ENCODE measurements at regions of chr18 and their contacts with region 1.

Region 1: DNA sequence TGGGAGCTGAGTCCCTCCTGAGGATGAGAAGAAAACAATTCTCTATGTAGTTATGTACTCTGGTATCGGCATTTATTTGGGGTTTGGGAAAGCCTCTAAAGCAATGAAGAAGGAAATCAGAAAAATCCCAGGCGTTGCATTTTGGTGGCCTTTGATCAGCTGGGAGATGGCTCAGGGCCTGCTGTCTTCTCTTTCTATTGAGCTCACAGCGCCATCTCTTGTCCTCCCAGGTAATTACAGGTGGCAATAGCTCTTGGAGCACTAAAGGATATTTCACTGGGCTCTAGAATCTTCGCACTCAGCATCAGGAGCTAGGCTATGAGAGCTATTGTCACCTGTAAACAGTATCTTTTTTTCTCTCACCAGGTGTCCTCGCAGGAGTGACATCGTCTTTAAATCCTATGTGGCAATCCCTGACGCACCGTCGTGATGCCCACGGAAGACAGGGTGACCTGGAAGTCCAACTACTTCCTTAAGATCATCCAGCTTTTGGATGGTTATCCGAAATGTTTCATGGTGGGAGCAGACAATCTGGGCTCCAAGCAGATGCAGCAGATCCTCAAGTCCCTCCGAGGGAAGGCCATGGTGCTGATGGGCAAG is 76.1 kb upstream of the PMAIP1 start:
- DNase-seq: peak; percentile 68
- H3K4me3 ChIP-seq: no peak overlapping the region
- H3K27ac ChIP-seq: no peak overlapping the region
- H3K27me3 ChIP-seq: no peaks in the 10 kb centered on the region
- CTCF ChIP-seq: peak; percentile 92

Region 2: DNA sequence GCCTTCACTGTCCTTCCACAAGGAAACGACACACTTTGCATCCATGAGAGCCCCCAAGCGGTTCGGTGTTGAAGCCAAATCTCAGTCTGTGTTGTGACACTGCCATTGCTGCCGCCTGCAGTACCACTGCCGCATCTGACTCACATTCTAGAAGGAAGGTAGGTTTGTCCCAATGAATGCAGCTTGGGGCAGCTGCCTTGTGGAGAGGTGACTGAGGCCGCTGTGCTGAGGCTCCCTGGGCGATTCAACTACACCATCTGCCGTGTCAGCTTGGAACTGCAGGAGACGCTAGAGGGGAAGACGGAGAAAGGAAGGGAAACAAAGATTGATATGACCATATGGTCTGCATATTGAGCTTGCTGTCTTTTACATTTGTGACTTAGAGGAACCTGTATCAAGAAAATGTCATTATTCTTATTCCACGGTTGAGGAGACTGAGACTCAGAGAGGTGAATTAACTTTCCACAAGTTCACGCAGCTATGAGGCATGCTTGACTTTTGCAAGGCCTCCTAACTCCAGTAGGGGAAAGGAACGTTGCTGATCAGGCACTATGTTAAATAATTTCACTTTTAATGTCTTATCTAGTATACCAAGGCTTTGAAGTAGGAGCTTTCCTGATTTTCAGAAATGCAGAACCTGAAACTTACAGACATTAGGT is 421.1 kb before region 1 on chr18:
- CTCF ChIA-PET with region 1: interaction called, 18 read pairs
- POLR2A ChIA-PET with region 1: no interaction called
- DNase-seq: peak; percentile 29
- H3K4me3 ChIP-seq: no peak overlapping the region
- H3K27ac ChIP-seq: no peak overlapping the region
- H3K27me3 ChIP-seq: no peaks in the 10 kb centered on the region
- CTCF ChIP-seq: peak; percentile 97

Region 3: GRCh38 chr18:59459369-59460079 is 364.2 kb before region 1 on chr18:
- CTCF ChIA-PET with region 1: interaction called, 218 read pairs
- POLR2A ChIA-PET with region 1: interaction called, 8 read pairs
- DNase-seq: peak; percentile 33
- H3K4me3 ChIP-seq: no peak overlapping the region
- H3K27ac ChIP-seq: peak overlapping the region; percentile 39
- H3K27me3 ChIP-seq: no peaks in the 10 kb centered on the region
- CTCF ChIP-seq: peak; percentile 60

Region 4: DNA sequence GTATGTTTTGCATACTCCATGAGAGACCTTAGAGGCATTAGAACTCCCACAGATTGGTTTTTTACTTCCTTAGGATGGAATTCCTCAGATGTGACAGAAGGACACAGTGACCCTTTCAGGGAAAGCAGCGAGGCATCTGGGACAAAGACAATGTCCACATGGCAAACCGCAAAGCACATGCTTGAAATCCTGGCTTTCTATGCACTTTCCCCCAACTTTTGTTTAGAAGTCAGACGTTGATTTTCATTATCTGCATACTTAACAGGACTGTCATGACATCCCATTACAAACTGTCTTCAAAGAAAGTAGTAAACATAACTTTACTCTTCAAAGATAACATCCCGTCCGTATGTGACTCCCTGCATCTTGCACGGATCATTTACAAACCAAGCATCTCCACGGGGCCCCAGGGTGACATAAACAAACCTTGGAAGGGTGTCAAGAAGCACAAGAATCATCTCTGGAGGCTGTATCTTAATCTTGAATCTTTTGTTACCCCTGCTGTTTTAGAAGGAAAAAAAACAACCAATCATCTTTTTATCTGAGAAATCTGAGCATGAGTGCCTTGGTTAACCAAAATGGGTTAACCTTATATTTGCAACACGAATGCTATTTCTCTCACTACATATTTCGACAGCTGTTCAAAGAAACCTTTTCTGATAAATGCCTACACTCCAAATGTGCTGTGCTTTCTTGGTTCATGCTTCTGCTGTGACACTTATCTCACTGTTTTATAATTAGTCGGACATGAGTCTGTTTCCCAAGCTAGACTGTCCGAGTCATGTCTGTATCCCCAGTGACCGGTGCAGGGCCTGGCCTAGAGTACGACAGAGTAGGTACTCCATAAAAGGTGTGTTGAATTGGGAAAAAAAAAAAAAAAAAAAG is 217.3 kb before region 1 on chr18:
- CTCF ChIA-PET with region 1: interaction called, 13 read pairs
- POLR2A ChIA-PET with region 1: no interaction called
- DNase-seq: peak; percentile 79
- H3K4me3 ChIP-seq: no peak overlapping the region
- H3K27ac ChIP-seq: peak overlapping the region; percentile 57
- H3K27me3 ChIP-seq: no peaks in the 10 kb centered on the region
- CTCF ChIP-seq: no peak

Region 5: DNA sequence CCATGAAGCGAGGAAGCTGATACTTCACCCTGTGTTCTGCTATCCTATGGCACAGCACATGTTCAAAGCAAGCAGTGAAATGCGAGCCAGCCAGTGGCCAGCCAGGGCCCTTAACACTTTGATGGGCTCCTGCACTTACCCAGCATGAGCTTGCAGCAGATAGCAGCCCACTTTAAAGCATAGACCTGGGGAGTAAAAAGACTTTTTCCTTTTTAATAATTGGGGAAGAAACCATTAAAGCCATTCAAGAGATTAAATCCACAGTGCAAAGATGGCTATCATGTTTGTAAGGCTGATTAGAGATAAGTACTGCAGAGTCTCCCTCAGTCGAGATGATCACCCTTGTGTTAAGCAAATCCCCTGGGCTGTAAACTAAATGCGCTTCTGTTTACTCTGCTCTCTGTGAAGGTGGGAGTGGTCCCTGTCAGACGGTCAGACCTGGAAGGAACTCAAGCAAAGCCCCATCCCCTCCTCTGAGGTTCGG is 142.1 kb before region 1 on chr18:
- CTCF ChIA-PET with region 1: interaction called, 13 read pairs
- POLR2A ChIA-PET with region 1: no interaction called
- DNase-seq: no peak
- H3K4me3 ChIP-seq: no peak overlapping the region
- H3K27ac ChIP-seq: no peak overlapping the region
- H3K27me3 ChIP-seq: no peaks in the 10 kb centered on the region
- CTCF ChIP-seq: no peak

Region 6: DNA sequence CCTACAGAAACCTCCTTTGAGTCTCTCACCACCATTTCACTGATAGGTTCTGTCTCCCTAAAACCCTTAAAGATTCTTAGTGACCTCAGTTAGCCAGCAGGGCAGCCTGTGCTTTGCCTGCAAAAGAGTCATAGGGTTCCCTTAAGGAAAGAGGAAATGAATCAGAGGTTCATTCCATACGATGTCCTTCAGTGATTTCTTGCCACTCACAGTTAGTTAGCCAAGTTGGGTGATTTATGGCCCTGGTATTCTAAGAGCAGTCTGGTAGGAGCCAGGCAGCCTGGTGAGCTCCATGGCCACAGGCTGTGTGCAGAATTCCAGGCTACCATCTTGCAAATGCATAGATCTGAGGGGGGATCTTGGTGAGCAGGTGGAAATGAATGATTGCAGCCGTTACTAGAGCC is 107.7 kb before region 1 on chr18:
- CTCF ChIA-PET with region 1: interaction called, 20 read pairs
- POLR2A ChIA-PET with region 1: no interaction called
- DNase-seq: peak; percentile 65
- H3K4me3 ChIP-seq: no peak overlapping the region
- H3K27ac ChIP-seq: peak overlapping the region; percentile 84
- H3K27me3 ChIP-seq: no peaks in the 10 kb centered on the region
- CTCF ChIP-seq: peak; percentile 31; the same call in 1 of the 2 replicates

Region 7: DNA sequence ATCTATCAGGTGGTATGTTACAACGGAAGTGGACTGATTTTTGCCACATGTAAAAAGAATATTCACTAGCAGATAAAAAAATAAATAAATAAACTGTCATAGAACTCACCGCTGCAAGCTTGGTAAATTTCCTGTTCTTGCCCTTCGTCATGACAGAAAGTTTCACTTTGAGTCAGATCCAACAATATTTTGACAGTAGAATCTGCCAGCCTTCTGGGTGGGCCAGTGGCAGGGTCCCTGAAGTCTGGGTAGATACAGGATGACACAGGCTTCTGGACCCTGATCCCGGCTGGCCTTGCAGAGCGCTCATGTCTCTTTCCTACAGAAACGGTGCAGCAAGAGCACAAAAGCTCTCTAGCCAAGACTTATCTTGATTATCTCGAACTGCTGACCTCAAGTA is 21.7 kb before region 1 on chr18:
- CTCF ChIA-PET with region 1: interaction called, 19 read pairs
- POLR2A ChIA-PET with region 1: no interaction called
- DNase-seq: no peak
- H3K4me3 ChIP-seq: no peak overlapping the region
- H3K27ac ChIP-seq: no peak overlapping the region
- H3K27me3 ChIP-seq: no peaks in the 10 kb centered on the region
- CTCF ChIP-seq: no peak

Measured in AG04450 (cell line).